AG04449 (cell line): ENCODE measurements at regions of chr4 and their contacts with region 1.

Region 1: DNA sequence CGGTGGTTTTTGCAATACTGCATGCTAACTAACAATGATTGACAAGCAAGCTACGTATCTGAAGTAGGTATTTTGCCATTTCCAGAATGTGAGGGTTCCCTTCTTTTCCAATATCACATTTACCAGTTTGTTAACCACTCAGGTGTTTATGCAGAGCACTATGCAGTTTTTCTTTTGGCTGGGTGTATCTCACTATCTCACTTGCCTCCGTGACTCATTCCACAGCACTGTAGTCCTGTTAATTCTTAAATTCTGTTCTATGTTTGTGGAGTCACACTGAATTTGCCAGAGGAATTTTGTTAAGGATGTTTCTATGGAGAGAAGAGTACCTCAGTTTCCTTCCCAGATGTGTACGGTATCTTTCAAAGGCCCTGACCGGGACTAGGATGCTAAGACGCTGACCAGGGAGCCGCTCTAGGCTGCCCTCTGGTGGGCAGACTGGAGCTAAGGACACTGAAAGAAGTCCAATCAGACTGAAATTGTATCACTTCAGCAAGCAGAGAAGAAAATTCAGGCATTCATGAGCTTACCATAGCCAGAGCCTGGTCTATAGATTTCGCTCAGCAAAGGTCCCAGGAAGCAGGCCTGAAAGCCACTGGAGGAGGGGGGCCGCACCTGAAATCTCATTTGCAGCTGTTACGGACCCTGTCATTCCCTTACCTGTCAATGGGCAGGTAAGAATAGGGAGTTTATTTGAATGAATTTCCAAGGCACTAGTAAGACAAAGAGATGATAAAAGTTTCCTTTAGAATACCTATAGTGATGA is 388.4 kb upstream of the SPOCK3 start:
- DNase-seq: peak; percentile 2
- H3K4me3 ChIP-seq: no peak overlapping the region
- CTCF ChIP-seq: peak; percentile 83

Region 2: GRCh38 chr4:167652267-167652666 is 29.6 kb after region 1 on chr4:
- CTCF ChIA-PET with region 1: interaction called, 10 read pairs
- POLR2A ChIA-PET with region 1: no interaction called
- DNase-seq: no peak
- H3K4me3 ChIP-seq: no peak overlapping the region
- CTCF ChIP-seq: no peak